ENCODE measurements at regions of chr5 and their contacts with region 1.

Region 1: GRCh38 chr5:80672140-80672736 is 17.5 kb upstream of the DHFR start:
- DNase-seq: peak; percentile 72 to 79
- ATAC-seq: peak; percentile 85 to 95; a peak in 5 of 6 replicates
- H3K4me3 ChIP-seq: no peak overlapping the region
- H3K27ac ChIP-seq: no peak overlapping the region
- H3K4me1 ChIP-seq: 0 out of 3 replicates have a peak, but pooled peaks cover 3% of the 10 kb centered on the region
- CTCF ChIP-seq: peak; percentile 84
- EP300 ChIP-seq: no peak
- POLR2A ChIP-seq: no peak
- RAD21 ChIP-seq: peak; percentile 64 to 67

Region 2: DNA sequence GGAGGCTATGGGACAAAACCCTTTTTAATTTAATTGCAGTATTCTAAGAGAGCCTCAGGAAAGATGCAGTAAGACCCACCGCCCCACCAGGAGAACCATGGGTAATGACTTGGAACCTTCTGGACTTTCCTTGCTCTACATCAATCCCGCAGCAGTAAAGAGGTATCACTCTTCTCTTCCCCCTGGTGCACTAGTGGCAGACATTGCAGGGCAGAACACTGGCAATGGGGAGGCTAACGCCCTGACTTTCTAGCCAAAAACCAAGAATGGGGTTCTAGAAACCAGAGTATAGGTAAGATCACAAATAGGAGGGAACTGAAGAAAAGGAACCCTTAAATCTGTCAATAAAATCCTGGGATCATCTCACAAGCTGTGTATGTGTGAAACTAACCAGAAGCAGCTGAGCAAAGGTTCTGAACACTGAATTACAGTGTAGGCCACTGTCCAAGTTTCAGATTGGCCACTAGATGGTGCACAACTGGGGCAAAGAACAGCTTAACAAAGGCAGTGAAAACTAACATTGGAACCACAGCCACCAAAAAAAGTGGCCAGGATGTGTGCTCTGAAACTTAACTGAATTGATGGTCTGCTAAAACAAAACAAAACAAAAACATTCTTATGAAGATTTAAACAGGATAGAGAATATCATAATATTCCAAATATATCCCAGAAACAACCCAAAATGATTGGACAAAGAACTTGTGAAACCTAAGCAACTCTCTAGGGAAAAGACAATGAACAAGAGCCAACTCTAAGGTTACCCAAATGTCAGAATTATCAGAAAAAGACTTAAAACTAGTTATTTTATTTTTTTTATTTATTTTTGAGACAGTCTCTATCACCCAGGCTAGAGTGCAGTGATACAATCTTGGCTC is 191.0 kb before region 1 on chr5:
- CTCF ChIA-PET with region 1: interaction called, 14 read pairs
- POLR2A ChIA-PET with region 1: no interaction called
- DNase-seq: peak; percentile 44 to 63
- ATAC-seq: peak; percentile 77 to 94
- H3K4me3 ChIP-seq: no peak overlapping the region
- H3K27ac ChIP-seq: no peak overlapping the region
- H3K4me1 ChIP-seq: no peaks in the 10 kb centered on the region
- CTCF ChIP-seq: peak; percentile 68
- EP300 ChIP-seq: no peak
- POLR2A ChIP-seq: no peak
- RAD21 ChIP-seq: peak; percentile 46 to 51; a peak in 4 of 5 replicates

Region 3: DNA sequence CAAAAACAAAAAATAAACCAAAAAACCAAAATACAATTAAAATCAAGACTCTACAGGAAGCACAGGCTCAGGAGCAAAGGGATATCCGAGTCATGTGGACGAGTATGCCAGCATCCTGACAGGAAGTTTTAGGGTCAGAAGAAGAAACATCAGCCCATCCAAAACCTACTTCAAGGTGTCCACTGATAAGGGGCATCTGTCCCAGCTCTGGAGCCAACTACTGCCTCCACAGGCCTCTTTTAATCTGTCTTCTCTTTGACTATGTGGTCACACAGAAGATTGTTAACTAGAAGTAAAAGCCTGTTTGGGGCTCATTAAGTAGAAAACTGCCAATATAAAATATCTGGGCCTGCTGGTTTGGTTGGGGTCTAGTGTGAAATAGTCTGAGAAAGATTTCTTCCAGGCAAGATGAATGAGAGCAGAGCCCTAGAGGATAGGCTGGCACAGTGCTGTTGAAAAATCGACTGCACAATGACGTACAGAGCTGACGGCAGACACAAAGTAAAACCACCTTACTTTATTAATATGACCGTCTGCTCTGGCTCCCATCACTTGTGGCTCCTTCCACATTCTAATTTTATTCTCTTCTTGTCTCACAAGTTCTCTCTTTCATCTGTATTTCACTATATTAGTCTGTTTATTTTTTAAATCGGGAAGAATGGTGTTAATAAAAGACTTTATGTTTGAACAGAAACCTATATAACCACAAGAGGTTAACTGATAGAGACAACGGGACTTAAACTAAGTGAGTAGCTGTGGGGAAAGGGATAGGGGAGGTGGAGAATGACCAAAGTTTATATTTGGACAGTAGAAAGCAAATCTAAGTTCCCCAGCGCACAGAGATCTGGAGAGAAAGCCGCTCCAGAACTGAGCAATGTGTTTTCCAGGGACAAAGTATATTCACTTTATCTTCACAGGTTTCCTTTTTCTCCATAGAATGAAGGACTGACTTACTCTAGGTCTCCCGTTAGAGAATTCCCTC is 40.7 kb before region 1 on chr5:
- CTCF ChIA-PET with region 1: no interaction called
- POLR2A ChIA-PET with region 1: no interaction called
- DNase-seq: no peak
- ATAC-seq: no peak
- H3K4me3 ChIP-seq: no peak overlapping the region
- H3K27ac ChIP-seq: no peak overlapping the region
- H3K4me1 ChIP-seq: no peaks in the 10 kb centered on the region
- CTCF ChIP-seq: no peak
- EP300 ChIP-seq: no peak
- POLR2A ChIP-seq: no peak
- RAD21 ChIP-seq: no peak

Region 4: DNA sequence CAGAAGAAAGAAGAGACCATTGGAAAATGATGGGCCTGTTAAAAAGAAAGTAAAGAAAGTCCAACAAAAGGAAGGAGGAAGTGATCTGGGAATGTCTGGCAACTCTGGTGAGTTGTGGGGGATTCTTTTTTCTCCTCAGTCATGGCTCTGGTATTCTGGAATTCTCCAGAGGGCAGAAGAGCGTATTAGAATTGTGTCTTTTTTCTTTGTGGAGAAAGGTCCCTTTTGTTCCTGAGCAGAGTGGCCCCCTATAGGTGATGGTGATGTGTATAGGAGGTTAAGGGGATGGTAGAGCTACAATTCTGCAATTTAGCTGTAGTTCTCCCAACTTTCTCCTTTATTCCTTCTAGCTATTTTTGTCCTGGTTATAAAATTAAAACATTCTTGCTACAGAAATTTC is 15.8 kb before region 1 on chr5:
- CTCF ChIA-PET with region 1: interaction called, 11 read pairs
- POLR2A ChIA-PET with region 1: no interaction called
- DNase-seq: peak in 1 of 2 experiments; percentile 26
- ATAC-seq: no peak
- H3K4me3 ChIP-seq: no peak overlapping the region
- H3K27ac ChIP-seq: no peak overlapping the region
- H3K4me1 ChIP-seq: peaks cover 10% of the 10 kb centered on the region; the same call in 1 of the 3 replicates
- CTCF ChIP-seq: no peak
- EP300 ChIP-seq: no peak
- POLR2A ChIP-seq: no peak
- RAD21 ChIP-seq: no peak

Region 5: DNA sequence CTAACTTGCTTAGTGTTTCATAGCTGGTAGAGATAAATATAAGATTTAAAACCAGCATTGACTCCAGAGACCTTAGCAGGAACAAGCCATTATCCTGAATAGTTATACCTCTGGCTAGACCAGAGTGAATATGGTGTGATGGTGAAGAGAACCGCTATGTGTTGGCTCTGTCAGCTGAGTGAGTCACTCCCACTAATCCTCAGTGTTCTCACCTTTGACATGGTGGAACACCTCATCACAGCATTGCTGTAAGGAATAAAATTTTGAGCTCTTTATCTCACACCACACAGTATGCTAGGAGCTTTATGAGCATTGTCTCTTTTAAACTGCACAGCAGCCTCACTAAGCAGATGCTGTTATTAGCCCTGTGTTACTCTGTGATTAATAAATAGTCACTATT is 73.3 kb after region 1 on chr5:
- CTCF ChIA-PET with region 1: no interaction called
- POLR2A ChIA-PET with region 1: no interaction called
- DNase-seq: no peak
- ATAC-seq: no peak
- H3K4me3 ChIP-seq: no peak overlapping the region
- H3K27ac ChIP-seq: no peak overlapping the region
- H3K4me1 ChIP-seq: no peaks in the 10 kb centered on the region
- CTCF ChIP-seq: no peak
- EP300 ChIP-seq: no peak
- POLR2A ChIP-seq: no peak
- RAD21 ChIP-seq: no peak

Region 6: DNA sequence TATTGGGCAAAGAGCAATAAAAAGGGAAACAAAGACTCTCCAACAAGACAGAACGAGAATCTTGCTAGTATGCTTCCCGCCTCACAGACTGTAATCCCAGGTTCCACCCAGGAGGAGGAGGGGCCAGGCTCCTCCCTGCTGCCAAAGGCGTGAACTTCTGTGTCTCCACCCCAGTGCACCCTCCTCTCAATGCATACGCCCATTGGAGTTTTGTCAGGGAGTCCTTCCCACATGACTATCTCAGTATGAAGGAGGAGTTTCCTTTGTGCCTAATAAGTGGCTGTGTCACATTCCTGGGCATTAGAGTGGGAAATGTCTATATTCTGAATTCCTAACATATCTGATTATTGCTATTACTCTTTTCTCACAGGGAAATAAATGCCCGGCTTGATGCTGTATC is 88.9 kb after region 1 on chr5:
- CTCF ChIA-PET with region 1: no interaction called
- POLR2A ChIA-PET with region 1: no interaction called
- DNase-seq: peak in 1 of 2 experiments; percentile 3
- ATAC-seq: peak in 1 of 2 experiments; percentile 55; a peak in 2 of 6 replicates
- H3K4me3 ChIP-seq: no peak overlapping the region
- H3K27ac ChIP-seq: no peak overlapping the region
- H3K4me1 ChIP-seq: no peaks in the 10 kb centered on the region
- CTCF ChIP-seq: no peak
- EP300 ChIP-seq: no peak
- POLR2A ChIP-seq: no peak
- RAD21 ChIP-seq: no peak